CD4-positive, alpha-beta memory T cell (primary cell): ENCODE measurements at regions of chr21 and their contacts with region 1.

Region 1: DNA sequence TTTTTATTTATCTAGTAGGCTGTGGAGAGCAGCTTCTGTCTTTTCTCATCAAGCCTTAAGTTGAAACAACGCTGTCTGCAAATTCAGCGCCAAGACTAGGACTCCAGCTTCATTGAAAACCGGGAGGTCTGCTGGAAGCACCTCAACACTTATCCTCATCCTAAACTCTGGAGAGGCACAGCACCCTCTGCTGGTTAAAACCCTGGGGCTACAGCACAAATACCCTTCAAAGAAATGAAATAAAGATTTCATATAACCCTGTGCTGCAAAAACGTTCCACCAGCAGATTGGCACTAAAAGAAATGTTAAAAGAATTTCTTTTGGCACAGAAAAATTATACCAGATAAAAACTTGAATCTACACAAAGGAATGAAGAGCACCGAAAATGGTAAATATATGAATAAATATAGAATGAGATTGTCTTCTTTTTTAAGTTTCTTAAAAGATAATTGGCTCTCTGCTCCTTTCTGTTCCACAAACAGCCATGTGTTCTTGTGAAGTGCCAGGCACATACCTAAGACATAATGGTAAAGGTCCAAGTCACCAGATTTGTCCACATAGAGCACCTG is 227.7 kb upstream of the SAMSN1 start:
- DNase-seq: peak; percentile 31 to 50 (median 43)
- H3K4me3 ChIP-seq: no peak overlapping the region
- H3K4me3 Mint-ChIP-seq: no peak overlapping the region
- H3K27ac ChIP-seq: no peak overlapping the region
- H3K27ac Mint-ChIP-seq: no peak overlapping the region
- H3K4me1 ChIP-seq: no peaks in the 10 kb centered on the region
- H3K4me1 Mint-ChIP-seq: no peaks in the 10 kb centered on the region
- H3K27me3 ChIP-seq: no peaks in the 10 kb centered on the region
- H3K27me3 Mint-ChIP-seq: peaks cover 3 to 4% of the 10 kb centered on the region in 2 donors

Region 2: GRCh38 chr21:14259747-14260146 is 514.1 kb before region 1 on chr21:
- CTCF ChIA-PET with region 1: interaction called, 8 read pairs
- POLR2A ChIA-PET with region 1: no interaction called
- intact Hi-C with region 1: loop called (anchors 2 kb)
- DNase-seq: peak in 3 of 5 donors; percentile 6 to 24 (median 11)
- H3K4me3 ChIP-seq: no peak overlapping the region
- H3K4me3 Mint-ChIP-seq: no peak overlapping the region
- H3K27ac ChIP-seq: no peak overlapping the region
- H3K27ac Mint-ChIP-seq: no peak overlapping the region
- H3K4me1 ChIP-seq: no peaks in the 10 kb centered on the region
- H3K4me1 Mint-ChIP-seq: no peaks in the 10 kb centered on the region
- H3K27me3 ChIP-seq: no peaks in the 10 kb centered on the region
- H3K27me3 Mint-ChIP-seq: peaks cover 3 to 10% of the 10 kb centered on the region in 2 donors

Region 3: GRCh38 chr21:14403681-14404318 is 370.1 kb before region 1 on chr21:
- CTCF ChIA-PET with region 1: interaction called, 13 read pairs
- POLR2A ChIA-PET with region 1: no interaction called
- intact Hi-C with region 1: loop called (anchors 1 kb)
- DNase-seq: peak in 4 of 5 donors; percentile 32 to 45 (median 38)
- H3K4me3 ChIP-seq: no peak overlapping the region
- H3K4me3 Mint-ChIP-seq: no peak overlapping the region
- H3K27ac ChIP-seq: no peak overlapping the region
- H3K27ac Mint-ChIP-seq: no peak overlapping the region
- H3K4me1 ChIP-seq: no peaks in the 10 kb centered on the region
- H3K4me1 Mint-ChIP-seq: peaks cover 0 to 1% (median 0%) of the 10 kb centered on the region in 4 donors
- H3K27me3 ChIP-seq: no peaks in the 10 kb centered on the region
- H3K27me3 Mint-ChIP-seq: peaks cover 0 to 3% of the 10 kb centered on the region in 2 donors

Region 4: GRCh38 chr21:14448784-14449183 is 325.1 kb before region 1 on chr21:
- CTCF ChIA-PET with region 1: interaction called, 3 read pairs
- POLR2A ChIA-PET with region 1: no interaction called
- intact Hi-C with region 1: loop called (anchors 10 kb)
- DNase-seq: no peak
- H3K4me3 ChIP-seq: no peak overlapping the region
- H3K4me3 Mint-ChIP-seq: no peak overlapping the region
- H3K27ac ChIP-seq: no peak overlapping the region
- H3K27ac Mint-ChIP-seq: no peak overlapping the region
- H3K4me1 ChIP-seq: peaks cover 20% of the 10 kb centered on the region
- H3K4me1 Mint-ChIP-seq: peaks cover 9 to 15% (median 12%) of the 10 kb centered on the region in 4 donors
- H3K27me3 ChIP-seq: no peaks in the 10 kb centered on the region
- H3K27me3 Mint-ChIP-seq: no peaks in the 10 kb centered on the region